ENCODE measurements at regions of chr7 and their contacts with region 1.

Region 1: DNA sequence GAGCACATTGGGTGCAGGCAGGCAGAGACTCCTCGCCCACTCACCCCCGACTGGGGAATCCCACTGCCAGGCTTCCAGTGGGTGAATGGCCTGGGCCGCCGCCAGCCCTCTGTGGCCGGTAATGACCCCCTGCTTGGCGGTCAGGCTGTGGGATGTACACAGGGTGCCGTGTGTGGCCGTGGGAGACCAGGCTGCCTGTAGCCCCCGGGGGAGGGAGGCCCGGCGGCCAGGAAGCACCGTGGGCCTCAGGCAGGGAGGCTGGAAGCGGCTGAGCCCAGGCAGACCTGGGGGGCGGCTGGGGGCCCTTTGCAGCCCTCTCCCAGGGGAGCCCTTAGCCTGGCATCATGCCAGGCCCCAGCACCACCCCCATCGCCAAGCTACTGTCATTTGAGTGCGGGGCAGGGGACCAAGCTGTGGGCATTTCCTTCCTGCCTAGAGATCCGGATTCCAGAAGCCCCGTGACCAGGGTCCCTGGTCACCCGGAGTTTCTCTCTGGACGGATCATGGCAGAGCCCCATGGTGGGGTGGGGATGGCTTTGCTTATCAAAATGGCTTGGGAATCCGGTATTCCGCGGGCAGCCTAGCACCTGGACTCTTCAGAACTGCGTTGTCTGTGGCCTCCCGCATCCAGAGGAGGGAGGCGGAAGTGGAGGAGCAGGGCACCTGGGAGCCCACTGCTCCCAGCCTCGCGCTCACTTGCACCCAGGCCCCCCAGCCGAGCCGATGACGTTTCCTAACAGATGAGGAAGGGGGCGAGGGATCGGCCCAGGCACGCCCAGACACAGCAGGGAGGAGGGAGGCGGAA is 1.1 kb downstream of the TTYH3 start:
- DNase-seq: peak; percentile 61 to 77
- ATAC-seq: no peak
- H3K4me3 ChIP-seq: peak overlapping the region; percentile 86
- H3K27ac ChIP-seq: peak overlapping the region; percentile 61
- H3K4me1 ChIP-seq: peaks cover 36% of the 10 kb centered on the region
- H3K27me3 ChIP-seq: no peaks in the 10 kb centered on the region
- CTCF ChIP-seq: no peak

Region 2: DNA sequence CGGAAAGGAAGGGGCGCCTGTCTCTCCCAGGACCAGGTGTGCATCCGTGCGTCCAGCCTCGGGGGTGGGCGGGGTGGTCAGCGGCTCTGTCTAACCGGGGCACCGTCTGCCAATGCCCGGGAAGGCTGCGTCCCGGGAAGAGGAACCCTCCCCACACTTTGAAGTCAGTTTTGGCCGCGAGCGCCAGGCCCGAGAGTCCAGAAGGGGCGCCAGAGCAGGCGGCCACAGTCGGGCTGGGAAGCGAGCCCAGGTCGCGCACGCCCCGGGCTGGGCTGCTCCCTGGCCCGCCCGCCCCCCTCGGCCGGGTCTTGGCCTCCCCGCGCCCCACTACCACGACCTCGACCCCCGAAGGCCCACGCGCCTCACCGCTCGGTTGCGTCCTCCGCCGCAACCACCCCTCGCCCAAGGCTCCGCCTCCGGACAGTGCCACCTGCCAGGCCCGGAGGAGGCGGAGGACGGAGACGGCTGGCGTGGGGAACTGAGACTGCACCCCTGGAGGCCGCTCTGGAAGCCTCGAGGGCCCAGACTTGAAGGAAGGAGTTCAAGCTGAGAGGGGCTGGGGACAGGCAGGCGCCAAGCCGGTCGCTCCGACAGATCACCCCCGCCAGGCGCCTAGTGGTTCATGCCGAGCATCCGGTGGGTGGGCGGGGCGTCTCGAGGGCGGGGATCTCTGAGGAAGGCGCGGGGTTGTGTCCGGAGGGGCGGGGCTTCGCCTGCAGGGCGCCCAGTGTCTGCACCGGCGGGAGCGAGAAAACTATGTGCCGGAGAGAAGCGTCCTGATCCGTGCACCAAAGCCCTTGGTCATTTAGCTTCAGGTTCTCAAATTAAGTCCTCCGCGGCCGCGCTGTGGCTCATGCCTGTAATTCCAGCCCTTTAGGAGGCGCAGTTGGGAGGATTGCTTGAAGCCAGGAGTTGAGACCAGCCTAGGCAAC is 77.5 kb before region 1 on chr7 and contains the start of gene BRAT1:
- intact Hi-C with region 1: loop called in 1 of 2 experiments (anchors 5 kb)
- DNase-seq: peak; percentile 98 to 99
- ATAC-seq: peak; percentile 93 to 96 (median 94)
- H3K4me3 ChIP-seq: peak within 1 kb of the TSS; percentile 91
- H3K27ac ChIP-seq: peak within 1 kb of the TSS; percentile 99
- H3K4me1 ChIP-seq: peaks cover 27% of the 10 kb centered on the region
- H3K27me3 ChIP-seq: no peaks in the 10 kb centered on the region
- CTCF ChIP-seq: peak; percentile 49
- total RNA-seq, gene BRAT1: 11.9 to 14.3 (median 12.5) TPM

Region 3: DNA sequence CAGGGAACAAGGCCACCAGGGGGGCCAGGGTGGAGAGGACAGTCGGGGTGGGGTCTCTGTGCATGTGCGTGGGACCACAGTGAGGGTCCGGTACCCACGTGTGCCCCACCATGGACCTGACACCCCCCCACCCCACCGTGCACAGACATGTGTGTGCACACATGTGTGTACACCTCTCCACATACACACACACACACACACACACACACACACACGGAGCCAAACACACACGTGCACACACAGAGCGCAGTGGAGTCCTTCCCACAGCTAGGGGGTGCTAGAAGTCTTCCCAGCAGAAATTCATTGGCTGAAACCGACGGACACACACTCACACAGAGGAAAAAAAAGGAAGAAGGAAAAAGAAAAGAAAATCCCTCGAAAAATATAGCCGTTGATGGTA is 254.0 kb after region 1 on chr7:
- intact Hi-C with region 1: no loop called
- DNase-seq: no peak
- ATAC-seq: peak in 1 of 4 donors; percentile 34
- H3K4me3 ChIP-seq: no peak overlapping the region
- H3K27ac ChIP-seq: no peak overlapping the region
- H3K4me1 ChIP-seq: no peaks in the 10 kb centered on the region
- H3K27me3 ChIP-seq: peaks cover 0 to 27% (median 0%) of the 10 kb centered on the region in 3 donors
- CTCF ChIP-seq: peak; percentile 26